Activated CD4-positive, alpha-beta T cell treated with anti-CD3 and anti-CD28 coated beads, Interleukin-2, amount 10 ng/mL, durations not matched to agents 7 days and 5 days (primary cell): ENCODE measurements at regions of chr2 and their contacts with region 1.

Region 1: DNA sequence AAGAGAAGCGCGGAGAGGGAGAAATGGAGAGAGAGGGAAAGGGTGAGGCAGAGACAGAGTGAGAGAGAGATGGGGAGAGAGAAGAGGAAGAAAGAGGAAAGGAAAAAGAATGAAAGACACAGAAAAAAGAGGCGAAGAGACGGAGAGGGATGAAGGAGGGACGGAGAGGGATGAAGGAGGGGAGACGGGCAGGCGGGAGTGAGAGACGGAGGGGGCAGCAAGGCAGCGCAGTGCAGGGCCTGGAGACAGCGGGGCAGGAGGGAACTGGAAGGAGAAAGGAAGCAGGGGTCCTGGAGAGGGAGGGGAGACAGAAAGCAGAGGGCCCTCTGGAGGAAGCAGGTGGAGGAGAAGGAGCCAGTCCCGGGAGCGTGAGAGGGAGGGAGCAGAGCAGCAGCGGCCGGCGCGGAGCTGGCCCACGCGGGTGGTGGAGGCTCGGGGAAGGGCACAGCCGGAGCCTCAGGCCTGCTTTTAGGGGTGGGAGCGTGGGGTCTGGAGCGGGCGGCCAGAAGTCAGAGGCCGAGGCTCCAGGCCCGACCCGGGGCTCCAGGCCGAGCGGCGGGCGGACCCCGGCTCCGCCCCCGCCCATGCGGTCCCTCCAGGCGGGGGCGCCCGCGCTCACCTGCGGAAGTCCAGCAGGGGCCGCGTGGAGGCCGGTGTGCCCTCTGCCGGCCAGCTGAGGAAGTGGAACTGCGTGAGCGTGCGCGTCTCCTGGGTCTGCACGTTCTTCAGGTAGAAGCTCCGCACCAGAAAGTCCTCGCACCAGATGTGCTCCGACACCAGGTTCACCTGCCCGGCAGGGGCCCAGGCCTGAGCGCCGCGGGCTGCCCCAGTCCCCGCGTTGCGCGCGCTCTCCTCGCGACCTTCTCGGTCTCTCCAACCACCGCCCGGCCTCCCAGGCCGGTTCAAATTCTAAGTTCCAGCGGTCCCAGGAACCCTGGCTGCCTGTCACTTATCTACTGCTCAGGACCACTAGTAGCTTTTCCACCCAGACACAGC is 14.5 kb downstream of the PTPRN start:
- DNase-seq: peak; percentile 88
- H3K4me3 Mint-ChIP-seq: peak overlapping the region; percentile 67
- H3K27ac Mint-ChIP-seq: peak overlapping the region; percentile 77
- H3K4me1 Mint-ChIP-seq: peaks cover 31% of the 10 kb centered on the region
- H3K27me3 Mint-ChIP-seq: peaks cover 13% of the 10 kb centered on the region

Region 2: GRCh38 chr2:219057709-219058540 is 236.7 kb before region 1 on chr2:
- CTCF ChIA-PET with region 1: interaction called, 16 read pairs
- POLR2A ChIA-PET with region 1: no interaction called
- DNase-seq: peak; percentile 76
- H3K4me3 Mint-ChIP-seq: no peak overlapping the region
- H3K27ac Mint-ChIP-seq: no peak overlapping the region
- H3K4me1 Mint-ChIP-seq: peaks cover 16% of the 10 kb centered on the region
- H3K27me3 Mint-ChIP-seq: peaks cover 69% of the 10 kb centered on the region

Region 3: DNA sequence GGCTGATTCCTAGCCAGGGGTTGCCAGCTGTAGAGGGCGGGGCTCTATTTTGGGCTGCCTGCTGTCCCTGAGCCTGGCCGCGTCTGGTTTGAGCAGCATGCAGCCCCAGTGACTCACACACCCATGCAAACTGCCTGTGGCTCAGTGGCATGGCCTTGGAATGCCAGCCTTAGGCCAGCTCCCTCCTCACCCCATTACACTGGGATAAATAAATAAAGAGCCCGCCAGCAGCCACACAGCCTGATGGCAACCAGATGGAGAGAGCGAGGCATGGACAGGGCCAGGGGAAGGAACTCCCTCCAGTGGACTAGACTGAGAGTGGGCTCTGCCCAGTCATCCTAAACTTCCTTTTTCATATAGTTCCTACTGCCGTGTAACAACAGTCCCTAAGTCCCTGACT is 152.3 kb before region 1 on chr2:
- CTCF ChIA-PET with region 1: no interaction called
- POLR2A ChIA-PET with region 1: no interaction called
- DNase-seq: no peak
- H3K4me3 Mint-ChIP-seq: no peak overlapping the region
- H3K27ac Mint-ChIP-seq: no peak overlapping the region
- H3K4me1 Mint-ChIP-seq: no peaks in the 10 kb centered on the region
- H3K27me3 Mint-ChIP-seq: no peaks in the 10 kb centered on the region

Region 4: DNA sequence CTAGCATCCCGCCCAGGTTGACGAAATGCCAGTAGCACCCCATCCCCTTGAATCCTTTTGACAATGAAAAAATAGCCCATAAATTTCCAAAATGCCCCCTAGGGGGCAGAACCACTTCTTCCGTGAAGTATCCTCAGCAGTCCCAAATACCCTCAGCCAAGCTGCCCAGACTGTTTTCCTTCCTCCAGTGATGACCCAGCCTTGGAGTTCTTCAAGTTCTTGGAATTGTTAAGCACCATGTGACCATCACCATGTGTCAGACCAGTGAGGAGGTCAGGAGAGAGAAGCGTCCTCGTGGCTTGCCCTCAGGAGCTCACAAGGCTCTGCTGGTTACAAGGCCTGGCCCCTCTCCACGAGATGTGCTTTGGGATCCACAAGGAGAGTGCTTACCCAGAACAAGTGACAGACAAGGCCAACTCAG is 123.4 kb before region 1 on chr2:
- CTCF ChIA-PET with region 1: interaction called, 26 read pairs
- POLR2A ChIA-PET with region 1: no interaction called
- DNase-seq: peak; percentile 56
- H3K4me3 Mint-ChIP-seq: no peak overlapping the region
- H3K27ac Mint-ChIP-seq: no peak overlapping the region
- H3K4me1 Mint-ChIP-seq: peaks cover 32% of the 10 kb centered on the region
- H3K27me3 Mint-ChIP-seq: no peaks in the 10 kb centered on the region

Region 5: DNA sequence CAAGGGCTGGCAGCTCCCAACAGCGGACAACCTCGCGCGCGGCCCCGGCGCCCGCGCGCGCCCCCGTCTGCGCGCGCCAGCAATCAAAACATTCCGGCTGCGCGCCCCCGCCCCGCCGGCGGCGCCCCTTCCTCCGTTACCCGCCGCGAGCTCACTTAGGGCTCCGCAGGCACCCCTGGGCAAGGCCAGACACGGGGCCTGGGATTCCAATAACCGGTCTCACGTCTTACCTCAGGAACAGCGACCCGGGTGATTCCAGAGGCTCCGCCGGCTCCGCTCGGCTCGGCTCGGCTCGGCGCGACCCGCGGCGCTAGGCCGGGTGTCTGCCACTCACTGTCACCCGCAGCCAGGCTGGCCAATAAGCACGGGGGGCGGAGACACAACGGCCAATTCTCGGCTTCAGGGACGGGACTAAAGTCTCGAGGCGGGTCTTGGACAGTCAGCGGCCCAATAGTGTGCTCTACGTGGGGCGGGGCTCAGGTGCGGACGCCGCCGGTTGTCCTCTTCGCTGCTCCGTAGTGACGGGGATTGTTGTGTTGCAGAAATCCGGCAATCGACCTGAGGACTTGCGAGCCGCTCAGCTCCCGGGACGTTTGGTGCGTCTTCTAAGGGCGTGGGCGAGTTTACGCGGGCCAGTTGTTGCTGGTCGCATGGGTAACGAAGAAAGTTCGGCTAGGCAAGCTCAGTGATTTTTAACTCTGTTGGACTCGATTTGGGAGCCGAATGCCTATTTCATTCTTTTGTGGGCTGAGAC is 65.2 kb before region 1 on chr2 and contains the starts of genes ANKZF1 and ATG9A:
- CTCF ChIA-PET with region 1: interaction called, 10 read pairs
- POLR2A ChIA-PET with region 1: no interaction called
- DNase-seq: peak; percentile 100
- H3K4me3 Mint-ChIP-seq: peak within 1 kb of the TSS; percentile 98
- H3K27ac Mint-ChIP-seq: peak within 1 kb of the TSS; percentile 100
- H3K4me1 Mint-ChIP-seq: peaks cover 60% of the 10 kb centered on the region
- H3K27me3 Mint-ChIP-seq: no peaks in the 10 kb centered on the region
- total RNA-seq, gene ANKZF1: 92.0 to 100 TPM
- total RNA-seq, gene ATG9A: 48.5 to 52.9 TPM

Region 6: GRCh38 chr2:219261024-219261855 is 33.4 kb before region 1 on chr2:
- CTCF ChIA-PET with region 1: interaction called, 99 read pairs
- POLR2A ChIA-PET with region 1: no interaction called
- DNase-seq: no peak
- H3K4me3 Mint-ChIP-seq: no peak overlapping the region
- H3K27ac Mint-ChIP-seq: no peak overlapping the region
- H3K4me1 Mint-ChIP-seq: no peaks in the 10 kb centered on the region
- H3K27me3 Mint-ChIP-seq: peaks cover 17% of the 10 kb centered on the region

Region 7: DNA sequence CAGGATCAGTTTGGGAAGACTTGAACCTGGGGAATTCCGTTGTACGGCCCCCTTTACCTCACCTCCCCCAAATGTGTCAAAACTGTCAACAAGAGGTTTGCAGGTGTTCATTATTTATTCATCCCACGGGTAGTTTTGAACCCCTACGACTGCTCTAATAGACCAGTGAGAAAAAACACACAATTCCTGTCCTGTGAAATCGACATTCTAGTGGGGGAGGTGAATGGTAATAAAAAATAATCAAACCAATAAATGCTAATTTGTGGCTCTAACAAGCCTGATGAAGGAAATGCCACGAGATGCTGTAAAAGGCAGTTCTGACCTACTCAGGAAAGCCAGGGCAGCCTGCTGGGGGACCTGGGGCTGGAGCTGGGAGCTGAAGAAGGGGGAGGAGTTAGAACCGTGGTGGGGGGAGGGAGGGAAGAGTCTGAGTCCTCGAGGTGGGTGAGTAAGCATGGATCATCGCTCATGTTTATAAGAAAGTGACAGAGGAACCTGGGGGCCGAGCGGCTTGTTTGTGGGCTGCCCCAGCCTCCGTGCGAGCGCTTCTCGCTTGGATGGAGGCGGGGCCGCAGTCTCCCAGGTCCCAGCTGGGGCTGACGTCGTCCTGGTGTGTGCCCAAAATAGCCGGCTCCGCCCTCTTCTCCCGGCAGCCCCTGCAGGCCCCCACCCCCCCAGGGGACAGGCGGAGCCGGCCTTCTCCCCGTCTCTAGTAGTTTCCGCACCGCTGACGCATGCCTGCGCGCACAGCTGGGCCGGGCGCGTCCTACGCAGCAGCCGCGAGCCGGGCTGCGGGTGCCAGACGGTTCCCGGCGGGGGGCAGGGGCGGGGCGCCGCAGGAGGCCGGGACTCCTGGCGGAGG is 15.8 kb before region 1 on chr2 and contains the start of gene DNAJB2:
- CTCF ChIA-PET with region 1: interaction called, 194 read pairs
- POLR2A ChIA-PET with region 1: no interaction called
- DNase-seq: peak; percentile 99
- H3K4me3 Mint-ChIP-seq: peak within 1 kb of the TSS; percentile 96
- H3K27ac Mint-ChIP-seq: peak within 1 kb of the TSS; percentile 99
- H3K4me1 Mint-ChIP-seq: peaks cover 41% of the 10 kb centered on the region
- H3K27me3 Mint-ChIP-seq: no peaks in the 10 kb centered on the region
- total RNA-seq, gene DNAJB2: 38.2 to 40.9 TPM